CD4-positive, alpha-beta memory T cell (primary cell): ENCODE measurements at regions of chr3 and their contacts with region 1.

Region 1: DNA sequence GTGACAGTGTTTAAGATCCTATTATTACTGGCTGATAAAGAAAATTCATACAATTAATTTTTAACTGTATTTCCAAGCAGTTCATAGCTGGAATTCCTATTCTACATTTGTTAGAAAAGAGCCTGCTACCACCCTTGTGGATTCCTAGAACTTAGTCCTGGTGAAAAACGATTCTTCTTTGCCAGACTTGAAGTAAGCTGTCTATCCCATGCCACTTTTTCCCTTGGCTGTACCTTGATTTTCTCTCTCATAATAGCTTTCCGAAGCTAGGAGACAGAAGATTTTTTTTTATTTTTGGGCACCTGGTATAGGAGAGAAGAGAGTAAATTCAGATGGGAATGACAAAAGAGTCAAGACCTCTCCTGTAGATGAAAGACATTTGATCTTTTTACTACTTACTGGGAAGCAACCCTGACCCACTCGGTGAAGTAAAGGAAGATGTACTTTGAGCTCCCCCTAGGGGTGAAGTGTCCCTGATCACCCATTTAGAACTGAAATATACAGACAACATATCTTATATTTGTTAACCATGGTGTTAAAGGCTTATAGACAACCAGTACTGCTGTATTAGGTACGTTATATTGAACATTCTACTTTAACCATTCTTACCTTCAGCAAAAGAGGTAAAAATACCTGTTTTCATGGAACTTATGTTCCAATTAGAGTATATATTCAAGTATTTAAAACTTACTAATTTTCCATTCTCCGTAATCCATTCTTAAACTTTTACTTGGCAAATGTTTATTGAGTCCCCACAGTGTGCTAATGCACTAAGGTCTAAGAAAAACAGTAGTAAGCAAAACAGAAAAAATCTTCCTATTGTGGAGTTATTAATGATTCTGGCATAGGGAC is 36.2 kb upstream of the C3orf38 start:
- DNase-seq: peak; percentile 60 to 72 (median 66)
- H3K4me3 ChIP-seq: no peak overlapping the region
- H3K4me3 Mint-ChIP-seq: no peak overlapping the region
- H3K27ac ChIP-seq: no peak overlapping the region
- H3K27ac Mint-ChIP-seq: peak overlapping the region in 5 of 7 donors; percentile 1 to 75 (median 55)
- H3K4me1 ChIP-seq: no peaks in the 10 kb centered on the region
- H3K4me1 Mint-ChIP-seq: peaks cover 7 to 18% (median 16%) of the 10 kb centered on the region in 4 donors
- H3K27me3 ChIP-seq: no peaks in the 10 kb centered on the region
- H3K27me3 Mint-ChIP-seq: no peaks in the 10 kb centered on the region

Region 2: DNA sequence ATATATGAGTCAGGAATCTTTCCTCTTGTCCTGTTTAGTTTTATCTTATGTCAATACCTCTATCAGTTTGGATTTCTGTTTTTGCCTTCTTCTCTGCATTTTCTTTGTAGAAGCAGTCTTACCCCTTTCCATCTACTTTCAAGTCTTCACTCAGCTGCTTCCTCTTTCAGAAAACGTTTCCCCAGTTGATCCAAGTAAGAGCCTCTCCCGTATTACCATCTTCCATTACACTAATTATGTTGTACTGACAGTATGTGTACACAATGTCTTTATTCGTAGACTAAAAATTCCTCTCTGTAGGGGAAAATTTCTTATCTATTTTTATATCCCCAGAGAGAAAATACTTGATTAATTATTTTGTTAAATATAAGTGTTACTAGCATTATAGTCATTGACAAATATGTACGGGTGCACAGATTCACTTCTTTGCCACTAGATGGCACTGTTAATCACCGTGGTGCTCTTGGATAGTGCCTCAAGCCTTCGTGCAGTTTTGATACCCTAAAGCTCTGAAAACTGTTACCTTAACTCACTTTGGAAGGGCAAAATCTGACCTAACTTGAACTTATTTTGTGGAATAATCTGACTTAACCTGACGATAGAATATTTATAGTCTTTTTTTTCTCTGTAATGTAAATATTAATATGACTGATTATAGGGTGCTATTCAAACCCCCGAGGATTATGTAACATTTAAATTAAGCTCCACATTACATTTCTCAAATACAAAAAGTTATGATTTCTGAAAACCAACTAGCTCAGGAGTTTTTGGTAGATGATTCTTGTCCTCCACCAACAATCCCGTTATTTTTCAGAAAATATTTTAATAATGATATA is 763.0 kb before region 1 on chr3:
- CTCF ChIA-PET with region 1: interaction called, 34 read pairs
- POLR2A ChIA-PET with region 1: no interaction called
- intact Hi-C with region 1: loop called (anchors 1 kb)
- DNase-seq: peak in 4 of 5 donors; percentile 46 to 54 (median 52)
- H3K4me3 ChIP-seq: no peak overlapping the region
- H3K4me3 Mint-ChIP-seq: no peak overlapping the region
- H3K27ac ChIP-seq: no peak overlapping the region
- H3K27ac Mint-ChIP-seq: no peak overlapping the region
- H3K4me1 ChIP-seq: no peaks in the 10 kb centered on the region
- H3K4me1 Mint-ChIP-seq: no peaks in the 10 kb centered on the region
- H3K27me3 ChIP-seq: no peaks in the 10 kb centered on the region
- H3K27me3 Mint-ChIP-seq: peaks cover 2 to 3% of the 10 kb centered on the region in 2 donors

Region 3: GRCh38 chr3:87900061-87900460 is 213.5 kb before region 1 on chr3:
- CTCF ChIA-PET with region 1: interaction called, 5 read pairs
- POLR2A ChIA-PET with region 1: no interaction called
- intact Hi-C with region 1: loop called (anchors 1 kb)
- DNase-seq: no peak
- H3K4me3 ChIP-seq: no peak overlapping the region
- H3K4me3 Mint-ChIP-seq: no peak overlapping the region
- H3K27ac ChIP-seq: no peak overlapping the region
- H3K27ac Mint-ChIP-seq: no peak overlapping the region
- H3K4me1 ChIP-seq: no peaks in the 10 kb centered on the region
- H3K4me1 Mint-ChIP-seq: no peaks in the 10 kb centered on the region
- H3K27me3 ChIP-seq: no peaks in the 10 kb centered on the region
- H3K27me3 Mint-ChIP-seq: no peaks in the 10 kb centered on the region

Region 4: DNA sequence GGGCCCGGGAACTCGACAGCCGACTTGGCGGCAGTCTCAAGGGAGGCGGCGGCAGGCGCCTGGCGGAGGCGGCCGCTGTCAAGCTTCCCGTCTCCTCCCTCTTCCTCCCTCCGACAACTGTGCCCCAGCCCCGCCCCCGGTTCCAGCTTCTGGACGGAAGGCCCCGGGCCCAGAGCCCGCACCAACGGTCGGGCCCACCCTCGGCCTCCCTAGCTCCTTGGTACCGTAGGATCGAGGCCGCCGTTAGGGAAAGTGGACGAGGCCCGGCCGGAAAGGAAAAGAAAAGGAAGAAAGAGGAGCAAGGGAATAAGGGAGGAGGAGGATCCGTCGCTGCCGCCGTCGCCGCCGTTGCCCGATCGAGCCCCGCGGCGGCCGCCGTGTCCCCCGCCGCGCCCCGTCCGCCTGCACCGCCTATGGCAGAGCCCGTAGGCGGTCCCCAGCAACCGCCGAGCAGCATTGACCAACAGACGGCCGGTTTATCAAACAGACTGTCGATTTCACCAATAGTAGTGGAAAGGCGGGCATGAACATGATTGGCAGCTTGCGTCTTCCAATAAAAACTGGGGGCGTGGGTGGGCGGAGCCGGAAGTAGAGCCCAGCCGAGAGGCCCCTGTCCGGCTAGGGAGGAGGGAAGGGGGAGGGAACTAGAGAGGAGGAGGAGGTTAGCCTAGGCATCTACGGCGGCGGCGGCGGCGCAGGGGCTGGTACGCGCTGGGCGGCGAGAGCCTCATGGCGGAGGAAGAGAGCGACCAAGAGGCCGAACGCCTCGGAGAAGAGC is 54.8 kb before region 1 on chr3 and contains the starts of genes CGGBP1 and ZNF654:
- CTCF ChIA-PET with region 1: interaction called, 8 read pairs
- POLR2A ChIA-PET with region 1: interaction called, 11 read pairs
- intact Hi-C with region 1: loop called (anchors 1 kb)
- DNase-seq: peak; percentile 99 to 100 (median 99)
- H3K4me3 ChIP-seq: peak within 1 kb of the TSS; percentile 73 to 92
- H3K4me3 Mint-ChIP-seq: peak within 1 kb of the TSS; percentile 94 to 99 (median 98)
- H3K27ac ChIP-seq: peak within 1 kb of the TSS; percentile 75
- H3K27ac Mint-ChIP-seq: peak within 1 kb of the TSS; percentile 95 to 99 (median 98)
- H3K4me1 ChIP-seq: peaks cover 66% of the 10 kb centered on the region
- H3K4me1 Mint-ChIP-seq: peaks cover 36 to 84% (median 54%) of the 10 kb centered on the region in 4 donors
- H3K27me3 ChIP-seq: no peaks in the 10 kb centered on the region
- H3K27me3 Mint-ChIP-seq: no peaks in the 10 kb centered on the region
- total RNA-seq, gene CGGBP1: 142 to 159 TPM
- total RNA-seq, gene ZNF654: 26.8 to 30.3 TPM

Region 5: DNA sequence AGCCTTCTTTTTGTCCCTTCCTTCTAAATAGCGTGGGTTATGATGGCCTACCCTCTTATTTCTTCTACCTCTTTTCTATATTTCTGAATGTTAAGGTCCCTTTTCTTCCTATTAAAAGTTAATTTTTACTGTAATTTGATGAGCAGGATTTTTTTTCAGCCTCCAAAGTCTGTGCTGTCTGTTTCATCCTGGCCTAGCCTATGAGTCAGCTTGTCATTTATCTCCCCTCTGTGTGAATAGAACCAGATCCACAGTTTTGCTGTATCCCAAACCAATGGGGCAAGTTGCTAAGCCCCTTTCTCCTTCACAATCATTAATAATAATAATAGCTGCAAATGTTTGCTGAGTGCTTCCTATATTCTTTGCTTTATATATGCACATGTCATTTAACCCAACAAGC is 18.2 kb after region 1 on chr3:
- CTCF ChIA-PET with region 1: interaction called, 25 read pairs
- POLR2A ChIA-PET with region 1: no interaction called
- intact Hi-C with region 1: no loop called
- DNase-seq: no peak
- H3K4me3 ChIP-seq: no peak overlapping the region
- H3K4me3 Mint-ChIP-seq: no peak overlapping the region
- H3K27ac ChIP-seq: no peak overlapping the region
- H3K27ac Mint-ChIP-seq: peak overlapping the region in 1 of 7 donors; percentile 42
- H3K4me1 ChIP-seq: no peaks in the 10 kb centered on the region
- H3K4me1 Mint-ChIP-seq: peaks cover 0 to 9% (median 2%) of the 10 kb centered on the region in 4 donors
- H3K27me3 ChIP-seq: no peaks in the 10 kb centered on the region
- H3K27me3 Mint-ChIP-seq: no peaks in the 10 kb centered on the region